A673 (cell line): ENCODE measurements at regions of chr2 and their contacts with region 1.

Region 1: GRCh38 chr2:15939854-15940660 is at the start of gene MYCN:
- DNase-seq: peak; percentile 95
- H3K4me3 ChIP-seq: peak within 1 kb of the TSS; percentile 60
- H3K27ac ChIP-seq: no peak within 1 kb of the TSS
- H3K4me1 ChIP-seq: peaks cover 19% of the 10 kb centered on the region
- H3K27me3 ChIP-seq: no peaks in the 10 kb centered on the region
- CTCF ChIP-seq: peak; percentile 89; the same call in 1 of the 2 replicates
- total RNA-seq, gene MYCN: 2.8 and 3.4 TPM in 2 replicates

Region 2: GRCh38 chr2:16226921-16227664 is 287.0 kb after region 1 on chr2:
- CTCF ChIA-PET with region 1: no interaction called
- POLR2A ChIA-PET with region 1: no interaction called
- intact Hi-C with region 1: loop called (anchors 10 kb)
- DNase-seq: peak; percentile 84
- H3K4me3 ChIP-seq: no peak overlapping the region
- H3K27ac ChIP-seq: no peak overlapping the region
- H3K4me1 ChIP-seq: peaks cover 5% of the 10 kb centered on the region
- H3K27me3 ChIP-seq: no peaks in the 10 kb centered on the region
- CTCF ChIP-seq: no peak

Region 3: DNA sequence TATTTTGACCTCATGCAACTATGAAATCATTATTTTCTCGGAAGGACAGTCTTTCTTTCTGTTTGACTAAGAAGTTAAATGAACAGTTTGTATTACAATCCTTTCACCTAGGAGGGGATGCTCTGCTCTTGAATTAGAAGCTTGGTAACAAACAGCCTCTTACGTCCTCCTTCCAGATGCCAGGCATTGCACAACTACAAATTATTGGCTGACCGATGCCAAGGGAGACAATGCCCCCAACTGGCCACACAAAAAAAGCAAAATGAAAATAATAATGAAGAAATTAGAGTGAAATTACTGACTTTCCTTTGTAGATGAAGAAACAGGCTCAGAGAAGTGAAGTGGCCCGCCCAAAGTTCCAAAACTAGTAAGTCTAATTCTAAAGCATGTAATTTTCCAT is 547.6 kb after region 1 on chr2:
- CTCF ChIA-PET with region 1: interaction called, 4 read pairs
- POLR2A ChIA-PET with region 1: no interaction called
- intact Hi-C with region 1: loop called (anchors 5 kb)
- DNase-seq: peak; percentile 35
- H3K4me3 ChIP-seq: no peak overlapping the region
- H3K27ac ChIP-seq: no peak overlapping the region
- H3K4me1 ChIP-seq: no peaks in the 10 kb centered on the region
- H3K27me3 ChIP-seq: peaks cover 12% of the 10 kb centered on the region
- CTCF ChIP-seq: peak; percentile 47

Region 4: GRCh38 chr2:16608661-16609643 is 668.9 kb after region 1 on chr2:
- CTCF ChIA-PET with region 1: interaction called, 3 read pairs
- POLR2A ChIA-PET with region 1: no interaction called
- intact Hi-C with region 1: loop called (anchors 5 kb)
- DNase-seq: peak; percentile 90
- H3K4me3 ChIP-seq: no peak overlapping the region
- H3K27ac ChIP-seq: peak overlapping the region; percentile 60
- H3K4me1 ChIP-seq: peaks cover 27% of the 10 kb centered on the region
- H3K27me3 ChIP-seq: no peaks in the 10 kb centered on the region
- CTCF ChIP-seq: peak; percentile 89